PC-9 (cell line): ENCODE measurements at regions of chr3 and their contacts with region 1.

Region 1: GRCh38 chr3:194089357-194090177 is 46.4 kb upstream of the HES1 start:
- DNase-seq: peak; percentile 98 to 100
- H3K4me3 ChIP-seq: peak overlapping the region; percentile 16; the same call in 1 of the 2 replicates
- H3K27ac ChIP-seq: peak overlapping the region; percentile 98
- H3K4me1 ChIP-seq: peaks cover 48% of the 10 kb centered on the region
- H3K27me3 ChIP-seq: no peaks in the 10 kb centered on the region
- CTCF ChIP-seq: no peak

Region 2: GRCh38 chr3:194030369-194030768 is 59.2 kb before region 1 on chr3:
- CTCF ChIA-PET with region 1: no interaction called
- POLR2A ChIA-PET with region 1: no interaction called
- intact Hi-C with region 1: loop called (anchors 1 kb)
- DNase-seq: peak; percentile 69 to 88
- H3K4me3 ChIP-seq: no peak overlapping the region
- H3K27ac ChIP-seq: peak overlapping the region; percentile 40
- H3K4me1 ChIP-seq: peaks cover 53% of the 10 kb centered on the region
- H3K27me3 ChIP-seq: no peaks in the 10 kb centered on the region
- CTCF ChIP-seq: no peak

Region 3: GRCh38 chr3:194112120-194113106 is 22.8 kb after region 1 on chr3:
- CTCF ChIA-PET with region 1: interaction called, 3 read pairs
- POLR2A ChIA-PET with region 1: no interaction called
- intact Hi-C with region 1: loop called (anchors 1 kb)
- DNase-seq: peak; percentile 85 to 100
- H3K4me3 ChIP-seq: peak overlapping the region; percentile 2; the same call in 1 of the 2 replicates
- H3K27ac ChIP-seq: peak overlapping the region; percentile 38
- H3K4me1 ChIP-seq: peaks cover 18% of the 10 kb centered on the region
- H3K27me3 ChIP-seq: no peaks in the 10 kb centered on the region
- CTCF ChIP-seq: no peak

Region 4: DNA sequence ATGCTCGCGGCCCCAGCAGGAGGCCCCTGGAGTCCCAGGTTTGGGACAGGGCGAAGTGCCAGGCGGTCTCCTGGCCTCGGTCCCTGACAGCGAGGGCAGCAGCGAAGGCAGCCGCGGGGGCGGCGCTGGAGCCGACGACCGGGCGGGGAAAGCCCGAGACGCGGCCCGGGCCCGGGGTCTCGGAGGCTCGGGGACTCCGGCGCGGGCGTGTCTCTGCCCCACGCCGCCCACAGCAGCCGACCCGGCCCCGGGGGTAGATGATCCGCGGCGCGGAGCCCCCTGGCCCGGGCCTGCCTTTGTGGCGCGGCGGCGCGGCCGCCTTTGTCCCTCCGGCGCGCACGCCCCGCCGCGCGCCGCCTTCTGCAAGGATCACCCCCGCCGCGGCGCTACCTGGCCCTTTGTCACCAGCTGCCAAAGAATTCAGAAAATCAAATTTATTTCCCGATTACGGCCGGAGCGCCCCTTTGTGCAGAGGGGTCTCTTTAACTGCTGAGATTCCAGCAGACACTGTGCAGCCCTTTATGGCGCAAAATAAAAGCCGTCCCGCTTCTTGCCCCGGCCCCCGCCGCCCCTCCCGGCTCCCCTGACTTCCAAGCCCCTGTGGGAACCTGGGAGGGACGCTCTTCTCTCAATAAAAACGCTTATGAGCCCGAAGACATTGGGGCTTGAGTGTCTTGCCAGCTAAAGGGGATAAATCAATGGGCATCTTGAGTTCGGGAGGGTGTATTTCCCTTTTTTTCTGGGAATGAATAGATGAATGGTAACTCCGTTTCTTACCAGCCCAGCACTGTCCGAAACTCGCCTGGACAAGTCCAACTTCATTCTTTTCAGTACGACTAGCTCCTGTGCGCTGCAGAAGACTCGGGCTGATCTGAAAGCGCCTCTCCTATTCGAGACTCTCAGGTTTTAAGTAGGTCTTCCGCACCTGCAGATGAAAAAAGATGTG is 114.7 kb after region 1 on chr3:
- CTCF ChIA-PET with region 1: no interaction called
- POLR2A ChIA-PET with region 1: no interaction called
- intact Hi-C with region 1: loop called (anchors 5 kb)
- DNase-seq: peak; percentile 62 to 78
- H3K4me3 ChIP-seq: peak overlapping the region; percentile 58
- H3K27ac ChIP-seq: peak overlapping the region; percentile 71
- H3K4me1 ChIP-seq: peaks cover 47% of the 10 kb centered on the region
- H3K27me3 ChIP-seq: no peaks in the 10 kb centered on the region
- CTCF ChIP-seq: no peak

Region 5: GRCh38 chr3:194323785-194324735 is 234.5 kb after region 1 on chr3:
- CTCF ChIA-PET with region 1: no interaction called
- POLR2A ChIA-PET with region 1: interaction called, 4 read pairs
- intact Hi-C with region 1: loop called (anchors 1 kb)
- DNase-seq: peak; percentile 60 to 72
- H3K4me3 ChIP-seq: no peak overlapping the region
- H3K27ac ChIP-seq: peak overlapping the region; percentile 98
- H3K4me1 ChIP-seq: peaks cover 39% of the 10 kb centered on the region
- H3K27me3 ChIP-seq: no peaks in the 10 kb centered on the region
- CTCF ChIP-seq: no peak